K562 (cell line): ENCODE measurements at regions of chr20 and their contacts with region 1.

Region 1: GRCh38 chr20:45545754-45546453 is 1.3 kb downstream of the EPPIN start:
- DNase-seq: peak; percentile 16 to 31 (median 28)
- ATAC-seq: peak; percentile 75
- H3K4me3 ChIP-seq: no peak overlapping the region
- H3K27ac ChIP-seq: no peak overlapping the region
- H3K4me1 ChIP-seq: no peaks in the 10 kb centered on the region
- H3K27me3 ChIP-seq: peaks cover 0 to 7% of the 10 kb centered on the region in 2 experiments; a peak in 2 of 5 replicates
- CTCF ChIP-seq: peak; percentile 34 to 59 (median 47); a peak in 3 of 6 replicates
- EP300 ChIP-seq: no peak
- POLR2A ChIP-seq: no peak
- RAD21 ChIP-seq: peak; percentile 62 to 67

Region 2: GRCh38 chr20:44598423-44599305 is 947.2 kb before region 1 on chr20:
- CTCF ChIA-PET with region 1: no interaction called
- POLR2A ChIA-PET with region 1: no interaction called
- in situ Hi-C with region 1: no loop called
- intact Hi-C with region 1: no loop called
- DNase-seq: peak in 1 of 4 experiments; percentile 31
- ATAC-seq: peak; percentile 55; the same call in 1 of the 3 replicates
- H3K4me3 ChIP-seq: no peak overlapping the region
- H3K27ac ChIP-seq: no peak overlapping the region
- H3K4me1 ChIP-seq: peaks cover 8% of the 10 kb centered on the region in 2 experiments
- H3K27me3 ChIP-seq: no peaks in the 10 kb centered on the region
- CTCF ChIP-seq: peak in 1 of 3 experiments; percentile 15; a peak in 1 of 6 replicates
- EP300 ChIP-seq: no peak
- POLR2A ChIP-seq: no peak
- RAD21 ChIP-seq: no peak; a peak in 1 of 4 replicates

Region 3: GRCh38 chr20:45020236-45020886 is 525.5 kb before region 1 on chr20:
- CTCF ChIA-PET with region 1: no interaction called
- POLR2A ChIA-PET with region 1: no interaction called
- in situ Hi-C with region 1: no loop called
- intact Hi-C with region 1: no loop called
- DNase-seq: no peak
- ATAC-seq: peak; percentile 58
- H3K4me3 ChIP-seq: no peak overlapping the region
- H3K27ac ChIP-seq: no peak overlapping the region
- H3K4me1 ChIP-seq: no peaks in the 10 kb centered on the region
- H3K27me3 ChIP-seq: no peaks in the 10 kb centered on the region
- CTCF ChIP-seq: no peak
- EP300 ChIP-seq: no peak
- POLR2A ChIP-seq: no peak
- RAD21 ChIP-seq: no peak

Region 4: DNA sequence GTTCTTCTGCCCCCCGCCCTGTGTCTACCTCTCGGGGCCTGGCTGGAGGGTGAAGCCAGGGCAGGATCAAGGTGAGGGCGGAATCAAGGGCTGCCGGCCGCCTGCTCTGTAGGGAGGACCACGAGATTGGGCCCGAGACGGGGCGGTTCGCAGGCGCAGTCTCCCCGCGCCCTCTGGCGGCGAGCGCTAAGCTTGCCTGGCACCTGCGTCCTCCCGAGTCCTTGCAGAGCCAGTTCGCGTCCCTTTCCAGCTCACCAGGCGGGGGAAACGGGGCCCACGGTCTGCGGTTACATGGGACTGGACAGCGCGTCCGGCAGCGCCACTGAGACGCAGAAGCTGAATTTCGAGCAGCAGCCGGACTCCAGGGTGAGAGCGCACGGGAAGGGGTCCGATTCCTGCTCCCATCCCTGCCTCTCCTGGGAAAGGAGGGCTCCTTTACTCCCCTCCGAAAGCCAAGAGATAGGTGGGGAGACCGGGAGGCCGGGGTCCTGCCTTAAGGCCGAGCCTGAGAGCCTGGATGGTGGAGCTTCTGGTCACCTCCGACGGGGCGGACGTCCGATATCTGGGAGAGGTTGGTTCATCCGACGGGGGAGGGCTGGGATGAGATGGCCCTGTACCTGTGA is 234.2 kb before region 1 on chr20:
- CTCF ChIA-PET with region 1: no interaction called
- POLR2A ChIA-PET with region 1: no interaction called
- in situ Hi-C with region 1: no loop called
- intact Hi-C with region 1: loop called (anchors 10 kb)
- DNase-seq: peak; percentile 78 to 81 (median 80)
- ATAC-seq: peak; percentile 93
- H3K4me3 ChIP-seq: no peak overlapping the region
- H3K27ac ChIP-seq: no peak overlapping the region
- H3K4me1 ChIP-seq: peaks cover 0 to 31% of the 10 kb centered on the region in 2 experiments; a peak in 2 of 5 replicates
- H3K27me3 ChIP-seq: peaks cover 8 to 60% of the 10 kb centered on the region in 2 experiments; a peak in 4 of 5 replicates
- CTCF ChIP-seq: peak; percentile 77 to 89 (median 84)
- EP300 ChIP-seq: no peak
- POLR2A ChIP-seq: no peak
- RAD21 ChIP-seq: peak; percentile 26 to 67; a peak in 3 of 4 replicates

Region 5: GRCh38 chr20:45765980-45766379 is 220.1 kb after region 1 on chr20:
- CTCF ChIA-PET with region 1: interaction called, 24 read pairs
- POLR2A ChIA-PET with region 1: no interaction called
- in situ Hi-C with region 1: loop called (anchors 5 kb)
- intact Hi-C with region 1: loop called (anchors 1 kb)
- DNase-seq: no peak
- ATAC-seq: no peak
- H3K4me3 ChIP-seq: no peak overlapping the region
- H3K27ac ChIP-seq: no peak overlapping the region
- H3K4me1 ChIP-seq: 0 out of 5 replicates have a peak, but pooled peaks cover 0 to 2% of the 10 kb centered on the region in 2 experiments
- H3K27me3 ChIP-seq: peaks cover 6 to 11% of the 10 kb centered on the region in 2 experiments; a peak in 4 of 5 replicates
- CTCF ChIP-seq: no peak
- EP300 ChIP-seq: no peak
- POLR2A ChIP-seq: no peak
- RAD21 ChIP-seq: no peak